Naive thymus-derived CD8-positive, alpha-beta T cell (primary cell): ENCODE measurements at regions of chr9 and their contacts with region 1.

Region 1: DNA sequence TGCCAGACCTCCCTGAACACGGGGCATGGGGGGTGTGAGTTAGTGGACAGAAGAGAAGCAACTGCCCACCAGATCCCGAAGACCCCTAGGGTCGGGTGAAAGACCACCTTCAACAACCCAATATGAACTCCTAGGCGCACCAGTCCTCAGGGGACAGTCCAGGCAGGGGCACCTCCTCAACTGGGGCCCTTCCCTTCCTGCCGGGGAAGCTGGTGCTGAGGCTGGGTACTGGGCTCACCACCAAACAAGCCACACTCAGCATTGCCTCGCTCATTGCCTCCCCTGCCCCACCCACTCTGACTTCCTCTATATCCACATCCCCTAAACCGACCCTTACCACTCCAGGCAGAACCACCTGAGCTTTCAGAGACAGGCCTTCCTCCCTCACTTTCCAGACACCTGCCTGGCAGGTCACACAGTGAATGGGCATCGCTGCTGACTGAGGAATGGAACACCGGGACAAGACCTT is 42.5 kb downstream of the SEMA4D start:
- DNase-seq: peak in 4 of 10 donors; percentile 55 to 66 (median 63)
- ATAC-seq: peak; percentile 48 to 66
- H3K4me3 Mint-ChIP-seq: peak overlapping the region; percentile 72 to 93 (median 82)
- H3K27ac Mint-ChIP-seq: peak overlapping the region; percentile 95 to 99 (median 97)
- H3K4me1 Mint-ChIP-seq: peaks cover 56 to 99% (median 97%) of the 10 kb centered on the region in 4 donors
- H3K27me3 Mint-ChIP-seq: no peaks in the 10 kb centered on the region

Region 2: GRCh38 chr9:89437000-89437631 is 18.3 kb before region 1 on chr9:
- POLR2A ChIA-PET with region 1: interaction called, 108 read pairs
- DNase-seq: peak in 9 of 10 donors; percentile 29 to 78 (median 55)
- ATAC-seq: peak; percentile 85 to 94
- H3K4me3 Mint-ChIP-seq: peak overlapping the region; percentile 55 to 84 (median 72)
- H3K27ac Mint-ChIP-seq: peak overlapping the region; percentile 87 to 97 (median 92)
- H3K4me1 Mint-ChIP-seq: peaks cover 46 to 99% (median 94%) of the 10 kb centered on the region in 4 donors
- H3K27me3 Mint-ChIP-seq: no peaks in the 10 kb centered on the region

Region 3: DNA sequence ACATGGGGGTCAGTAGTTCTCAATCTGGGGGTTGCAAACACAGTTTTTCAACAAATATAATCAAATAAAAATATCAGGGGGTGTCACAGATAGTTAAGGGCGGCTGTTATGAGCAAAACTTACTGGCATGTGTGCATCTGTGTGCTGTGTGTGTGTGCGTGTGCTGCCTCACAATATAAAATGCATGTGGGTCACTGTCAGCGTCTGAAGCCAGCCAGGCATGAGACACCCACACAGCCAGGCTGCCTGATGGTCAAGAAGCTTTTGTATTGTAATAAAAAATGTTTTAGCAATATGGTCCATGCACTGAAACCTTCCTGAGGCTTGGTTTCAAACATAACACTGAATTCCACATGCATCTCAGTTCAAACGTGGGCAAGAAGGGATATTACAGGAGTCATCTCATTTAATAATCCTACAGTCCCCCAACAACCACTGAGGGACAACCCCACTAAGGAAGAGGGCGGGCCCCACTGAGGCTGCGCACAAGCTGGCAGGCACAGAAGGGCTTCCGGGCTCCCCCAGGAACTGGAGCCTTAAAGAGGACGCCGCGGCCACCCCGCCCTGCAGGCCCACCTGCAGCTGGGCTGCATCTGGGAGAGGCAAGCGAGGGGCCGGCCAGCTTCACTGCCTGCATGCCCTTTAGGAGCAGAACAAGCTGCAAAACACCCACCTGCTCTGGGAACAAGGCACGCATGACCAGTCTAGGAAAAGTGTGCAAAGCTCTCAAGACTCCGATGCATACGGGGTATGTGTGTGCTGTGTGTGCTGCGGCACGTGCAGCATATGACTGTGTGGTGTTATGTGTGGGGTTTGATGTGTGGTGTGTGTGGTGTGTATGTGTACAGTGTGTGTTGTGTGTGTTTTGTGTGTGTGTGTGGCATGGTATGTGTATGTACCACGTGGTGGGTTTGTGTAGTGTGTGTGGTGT is 28.5 kb after region 1 on chr9:
- POLR2A ChIA-PET with region 1: interaction called, 27 read pairs
- DNase-seq: peak; percentile 65 to 89 (median 73)
- ATAC-seq: peak; percentile 71 to 84
- H3K4me3 Mint-ChIP-seq: peak overlapping the region; percentile 73 to 99 (median 95)
- H3K27ac Mint-ChIP-seq: peak overlapping the region; percentile 94 to 99 (median 95)
- H3K4me1 Mint-ChIP-seq: peaks cover 56 to 93% (median 91%) of the 10 kb centered on the region in 4 donors
- H3K27me3 Mint-ChIP-seq: no peaks in the 10 kb centered on the region

Region 4: GRCh38 chr9:89522261-89522958 is 67.0 kb after region 1 on chr9:
- POLR2A ChIA-PET with region 1: interaction called, 13 read pairs
- DNase-seq: peak; percentile 41 to 90 (median 81)
- ATAC-seq: peak; percentile 84 to 89
- H3K4me3 Mint-ChIP-seq: peak overlapping the region; percentile 49 to 87 (median 75)
- H3K27ac Mint-ChIP-seq: peak overlapping the region; percentile 87 to 98 (median 96)
- H3K4me1 Mint-ChIP-seq: peaks cover 56 to 99% (median 94%) of the 10 kb centered on the region in 4 donors
- H3K27me3 Mint-ChIP-seq: no peaks in the 10 kb centered on the region